ENCODE measurements at regions of chrX and their contacts with region 1.

Region 1: DNA sequence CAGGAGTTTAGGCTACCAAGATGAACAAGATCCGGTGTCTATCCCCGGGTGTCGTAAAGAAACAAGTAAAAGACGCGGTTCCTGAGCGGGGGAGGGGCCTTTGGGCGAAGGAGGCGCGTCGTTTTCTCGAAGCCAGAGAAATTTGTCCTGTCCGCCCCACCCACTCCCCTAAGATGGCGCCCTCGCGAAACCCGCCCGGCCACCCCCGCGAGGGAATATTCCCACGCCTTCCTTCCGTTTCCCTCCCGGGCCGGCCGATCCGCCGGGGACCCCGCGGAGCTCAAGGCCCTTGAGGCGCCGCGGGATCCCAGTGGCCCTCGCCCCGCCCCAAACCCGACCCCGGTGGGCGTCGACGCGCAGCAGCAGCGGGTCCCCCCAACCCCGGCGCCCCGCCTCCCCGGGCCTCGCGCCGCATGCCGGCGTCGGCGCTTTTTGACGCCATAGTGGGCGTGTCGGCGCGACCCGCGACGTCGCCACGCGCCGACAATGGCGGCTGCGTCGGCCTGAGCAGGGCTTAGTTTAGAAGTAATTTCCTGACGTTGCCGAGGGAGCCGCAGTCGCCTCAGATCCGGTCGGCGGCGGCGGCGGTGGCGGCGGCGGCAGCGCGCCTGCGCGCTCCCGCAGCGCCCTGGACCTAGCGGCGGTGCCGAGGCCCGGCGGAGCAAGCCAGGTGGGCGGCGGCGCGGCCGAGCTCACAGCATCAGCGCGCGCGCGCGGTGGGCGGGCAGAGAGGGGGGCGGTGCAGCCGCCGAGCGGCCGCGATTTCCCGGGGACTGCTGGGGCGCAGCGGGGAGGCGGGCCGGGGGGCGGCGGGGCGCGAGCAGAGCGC is at the start of gene HTATSF1:
- DNase-seq: peak; percentile 92
- H3K4me3 Mint-ChIP-seq: peak within 1 kb of the TSS; percentile 93
- H3K27ac Mint-ChIP-seq: peak within 1 kb of the TSS; percentile 96
- H3K4me1 Mint-ChIP-seq: peaks cover 17% of the 10 kb centered on the region
- H3K27me3 Mint-ChIP-seq: peaks cover 2% of the 10 kb centered on the region
- total RNA-seq, gene HTATSF1: 49.4 to 53.4 TPM

Region 2: GRCh38 chrX:135521405-135522189 is 975.4 kb before region 1 on chrX:
- CTCF ChIA-PET with region 1: no interaction called
- POLR2A ChIA-PET with region 1: no interaction called
- intact Hi-C with region 1: loop called (anchors 2 kb)
- DNase-seq: peak; percentile 92
- H3K4me3 Mint-ChIP-seq: peak overlapping the region; percentile 99
- H3K27ac Mint-ChIP-seq: peak overlapping the region; percentile 100
- H3K4me1 Mint-ChIP-seq: peaks cover 41% of the 10 kb centered on the region
- H3K27me3 Mint-ChIP-seq: peaks cover 2% of the 10 kb centered on the region

Region 3: GRCh38 chrX:136147315-136147901 is 349.6 kb before region 1 on chrX and contains the start of gene FHL1:
- CTCF ChIA-PET with region 1: no interaction called
- POLR2A ChIA-PET with region 1: no interaction called
- intact Hi-C with region 1: loop called (anchors 10 kb)
- DNase-seq: peak; percentile 68
- H3K4me3 Mint-ChIP-seq: peak within 1 kb of the TSS; percentile 78
- H3K27ac Mint-ChIP-seq: peak within 1 kb of the TSS; percentile 63
- H3K4me1 Mint-ChIP-seq: peaks cover 43% of the 10 kb centered on the region
- H3K27me3 Mint-ChIP-seq: no peaks in the 10 kb centered on the region
- total RNA-seq, gene FHL1: 33.9 to 37.5 TPM

Region 4: GRCh38 chrX:136577552-136577951 is 80.6 kb after region 1 on chrX:
- CTCF ChIA-PET with region 1: interaction called, 15 read pairs
- POLR2A ChIA-PET with region 1: no interaction called
- intact Hi-C with region 1: loop called (anchors 2 kb)
- DNase-seq: peak; percentile 83
- H3K4me3 Mint-ChIP-seq: peak overlapping the region; percentile 50
- H3K27ac Mint-ChIP-seq: peak overlapping the region; percentile 82
- H3K4me1 Mint-ChIP-seq: peaks cover 44% of the 10 kb centered on the region
- H3K27me3 Mint-ChIP-seq: no peaks in the 10 kb centered on the region

Region 5: DNA sequence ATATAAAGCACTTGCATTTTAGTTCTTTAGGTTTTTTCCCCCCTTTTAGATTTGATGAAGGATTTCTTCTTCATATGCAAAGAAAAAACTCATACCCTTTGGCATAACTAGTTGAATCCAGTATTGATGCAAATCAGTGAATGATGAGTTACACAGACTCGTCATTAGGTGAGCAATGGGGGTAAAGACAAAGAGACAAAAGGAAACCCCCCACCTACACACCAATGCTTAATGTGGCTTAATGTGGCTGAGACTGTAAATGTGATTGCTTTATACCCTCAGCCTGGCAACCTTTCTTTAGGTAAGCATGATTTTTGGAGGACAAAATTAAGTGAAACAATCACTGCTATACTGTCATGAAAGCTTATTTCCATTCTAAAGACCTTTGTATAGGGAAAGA is 190.5 kb after region 1 on chrX:
- CTCF ChIA-PET with region 1: no interaction called
- POLR2A ChIA-PET with region 1: no interaction called
- intact Hi-C with region 1: loop called (anchors 2 kb)
- DNase-seq: peak; percentile 48
- H3K4me3 Mint-ChIP-seq: peak overlapping the region; percentile 17
- H3K27ac Mint-ChIP-seq: peak overlapping the region; percentile 83
- H3K4me1 Mint-ChIP-seq: peaks cover 53% of the 10 kb centered on the region
- H3K27me3 Mint-ChIP-seq: no peaks in the 10 kb centered on the region